Activated T-helper 2 cell treated with anti-CD3 and anti-CD28 coated beads, Interferon-gamma antibody, Interleukin-2, Interleukin-4, amounts not matched to agents 10 μg/mL and 5 μg/mL and 100 μg/mL, durations not matched to agents 14 hours and 24 hours and 36 hours (primary cell): ENCODE measurements at regions of chr9 and their contacts with region 1.

Region 1: DNA sequence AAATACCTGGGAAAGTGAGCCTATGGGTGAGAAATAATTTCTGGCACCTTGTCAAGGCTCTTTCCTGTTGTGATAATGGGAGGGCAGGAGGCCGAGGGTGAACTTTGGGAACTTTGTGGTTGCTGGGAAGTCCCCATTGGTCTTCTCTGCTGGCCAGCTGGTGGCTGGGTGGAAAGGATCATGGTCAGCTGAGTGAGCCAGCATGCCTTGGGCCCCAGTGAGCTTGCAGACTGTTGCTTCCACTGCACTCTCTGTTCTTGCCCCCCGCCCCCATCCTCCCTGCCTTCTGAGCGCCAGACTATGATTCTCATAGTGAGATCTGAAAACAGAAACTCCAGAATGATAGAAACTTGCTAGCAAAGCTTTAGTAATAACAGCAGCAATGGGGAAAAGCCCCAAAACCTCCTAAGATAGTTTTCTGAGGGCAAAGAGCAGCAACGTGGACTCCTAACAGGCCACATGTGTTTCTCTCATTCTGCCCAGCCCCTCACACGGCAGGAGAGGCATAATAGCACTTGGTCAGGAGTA is 139.2 kb upstream of the SMARCA2 start:
- DNase-seq: no peak
- H3K4me3 Mint-ChIP-seq: no peak overlapping the region
- H3K27ac Mint-ChIP-seq: peak overlapping the region; percentile 80
- H3K4me1 Mint-ChIP-seq: peaks cover 19% of the 10 kb centered on the region
- H3K27me3 Mint-ChIP-seq: peaks cover 30% of the 10 kb centered on the region

Region 2: DNA sequence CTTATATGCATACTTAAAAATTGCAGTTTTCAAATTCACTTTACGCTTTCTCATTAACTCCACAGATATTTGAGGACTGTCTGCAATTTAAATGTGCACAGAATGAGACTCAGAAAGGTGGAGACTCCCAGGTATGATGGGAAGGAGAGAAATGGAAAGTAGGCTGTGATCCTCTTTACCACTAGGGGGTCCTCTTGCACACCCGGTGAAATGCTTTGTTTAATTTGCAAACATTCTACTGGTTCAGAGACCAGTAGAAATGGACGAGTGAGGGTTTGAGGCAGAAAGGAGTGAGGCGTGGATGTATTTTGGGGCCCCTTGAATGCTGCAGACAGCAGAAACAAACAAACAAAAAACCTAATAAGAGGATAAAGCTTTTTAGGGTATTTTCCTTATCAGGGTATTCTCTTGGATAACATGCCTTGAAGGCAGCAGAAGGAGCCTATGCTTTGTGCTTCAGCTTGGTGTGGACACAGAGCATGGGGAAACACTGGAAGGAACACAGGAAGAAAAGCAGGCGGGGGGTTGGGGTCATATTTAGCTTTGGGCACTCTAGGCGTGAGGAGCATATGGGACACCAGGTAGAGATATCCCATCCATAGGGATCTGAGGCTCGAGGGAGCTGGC is 415.7 kb before region 1 on chr9:
- intact Hi-C with region 1: loop called (anchors 2 kb)
- DNase-seq: peak; percentile 8
- H3K4me3 Mint-ChIP-seq: no peak overlapping the region
- H3K27ac Mint-ChIP-seq: peak overlapping the region; percentile 6
- H3K4me1 Mint-ChIP-seq: peaks cover 10% of the 10 kb centered on the region
- H3K27me3 Mint-ChIP-seq: no peaks in the 10 kb centered on the region

Region 3: DNA sequence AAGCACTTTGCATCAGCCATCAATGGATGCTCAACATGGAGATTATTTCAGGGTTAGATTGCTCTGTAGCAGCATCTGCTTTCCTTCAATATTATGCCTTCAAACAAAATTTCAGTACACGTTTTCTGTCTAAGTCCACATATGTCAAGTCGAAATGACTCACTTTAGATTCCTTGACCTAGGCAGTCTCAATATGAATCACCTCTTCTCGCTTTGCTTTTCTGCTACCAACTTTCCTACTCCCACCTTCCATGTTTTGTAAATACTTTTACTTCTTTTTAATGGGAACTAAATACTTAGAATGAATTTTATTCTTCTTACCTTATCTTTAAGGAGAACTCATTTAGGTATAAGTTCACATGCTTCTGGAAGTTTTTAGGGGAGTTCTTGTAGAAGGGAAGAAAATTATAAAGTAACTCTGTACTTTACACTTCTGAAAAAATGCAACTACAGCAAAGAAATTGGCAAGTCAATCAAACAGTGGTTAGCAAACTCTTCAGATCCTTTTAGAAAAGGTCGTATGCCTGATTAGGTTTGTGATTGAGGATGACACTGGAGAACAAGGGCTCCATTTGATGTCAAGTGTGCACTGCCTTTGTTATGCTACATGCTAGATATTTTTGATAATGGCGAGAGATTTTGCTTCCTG is 339.3 kb before region 1 on chr9:
- intact Hi-C with region 1: loop called (anchors 1 kb)
- DNase-seq: no peak
- H3K4me3 Mint-ChIP-seq: no peak overlapping the region
- H3K27ac Mint-ChIP-seq: peak overlapping the region; percentile 71
- H3K4me1 Mint-ChIP-seq: peaks cover 23% of the 10 kb centered on the region
- H3K27me3 Mint-ChIP-seq: no peaks in the 10 kb centered on the region

Region 4: GRCh38 chr9:2014696-2015580 is 139.0 kb after region 1 on chr9 and contains the start of gene SMARCA2:
- intact Hi-C with region 1: loop called (anchors 2 kb)
- DNase-seq: peak; percentile 97
- H3K4me3 Mint-ChIP-seq: peak within 1 kb of the TSS; percentile 98
- H3K27ac Mint-ChIP-seq: peak within 1 kb of the TSS; percentile 99
- H3K4me1 Mint-ChIP-seq: peaks cover 39% of the 10 kb centered on the region
- H3K27me3 Mint-ChIP-seq: peaks cover 9% of the 10 kb centered on the region
- total RNA-seq, gene SMARCA2: 84.5 and 90.4 TPM in 2 replicates

Region 5: DNA sequence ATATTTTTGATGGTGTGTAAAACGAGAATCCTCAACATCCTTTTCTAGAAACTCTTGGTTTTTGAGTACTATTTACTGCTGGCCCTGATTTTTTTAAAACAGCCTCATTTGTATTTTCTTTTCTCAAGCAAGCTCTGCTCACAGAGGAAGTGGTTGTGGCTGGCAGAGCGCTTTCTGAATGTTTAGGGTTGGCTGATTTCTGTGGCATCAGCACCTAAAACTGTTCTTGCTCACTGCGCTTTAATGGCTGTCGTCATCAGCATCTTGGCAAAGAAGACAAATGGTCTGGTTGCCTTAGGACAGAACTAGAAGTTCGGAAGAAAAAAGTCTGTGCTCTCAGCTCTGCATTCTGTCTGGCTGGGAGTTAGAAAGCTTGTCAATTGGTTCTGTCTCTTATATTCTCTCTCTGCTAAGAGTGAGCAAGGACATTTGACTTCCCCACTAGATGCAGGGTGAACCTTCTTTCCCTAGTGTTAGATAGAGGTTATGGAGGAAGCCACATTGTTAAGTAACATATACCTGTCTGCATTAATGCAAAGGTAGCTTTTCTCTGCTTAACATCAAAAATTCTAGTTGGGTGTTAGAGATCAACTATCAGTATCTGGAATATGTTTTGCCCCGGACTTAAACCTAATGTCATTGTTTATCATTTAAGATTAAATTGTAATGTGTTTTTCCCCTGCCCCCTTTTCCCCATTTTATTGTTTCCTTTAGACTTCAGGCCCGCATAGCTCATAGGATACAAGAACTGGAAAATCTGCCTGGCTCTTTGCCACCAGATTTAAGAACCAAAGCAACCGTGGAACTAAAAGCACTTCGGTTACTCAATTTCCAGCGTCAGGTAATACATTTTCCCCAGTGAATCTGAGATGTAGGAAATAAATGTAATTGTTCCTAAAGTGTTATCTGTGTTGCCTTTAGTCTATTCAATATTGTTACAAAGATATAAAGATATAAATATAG is 178.2 kb after region 1 on chr9:
- intact Hi-C with region 1: loop called (anchors 1 kb)
- DNase-seq: peak; percentile 71
- H3K4me3 Mint-ChIP-seq: peak overlapping the region; percentile 15
- H3K27ac Mint-ChIP-seq: peak overlapping the region; percentile 24
- H3K4me1 Mint-ChIP-seq: peaks cover 31% of the 10 kb centered on the region
- H3K27me3 Mint-ChIP-seq: no peaks in the 10 kb centered on the region